ENCODE measurements at regions of chr1 and their contacts with region 1.

Region 1: DNA sequence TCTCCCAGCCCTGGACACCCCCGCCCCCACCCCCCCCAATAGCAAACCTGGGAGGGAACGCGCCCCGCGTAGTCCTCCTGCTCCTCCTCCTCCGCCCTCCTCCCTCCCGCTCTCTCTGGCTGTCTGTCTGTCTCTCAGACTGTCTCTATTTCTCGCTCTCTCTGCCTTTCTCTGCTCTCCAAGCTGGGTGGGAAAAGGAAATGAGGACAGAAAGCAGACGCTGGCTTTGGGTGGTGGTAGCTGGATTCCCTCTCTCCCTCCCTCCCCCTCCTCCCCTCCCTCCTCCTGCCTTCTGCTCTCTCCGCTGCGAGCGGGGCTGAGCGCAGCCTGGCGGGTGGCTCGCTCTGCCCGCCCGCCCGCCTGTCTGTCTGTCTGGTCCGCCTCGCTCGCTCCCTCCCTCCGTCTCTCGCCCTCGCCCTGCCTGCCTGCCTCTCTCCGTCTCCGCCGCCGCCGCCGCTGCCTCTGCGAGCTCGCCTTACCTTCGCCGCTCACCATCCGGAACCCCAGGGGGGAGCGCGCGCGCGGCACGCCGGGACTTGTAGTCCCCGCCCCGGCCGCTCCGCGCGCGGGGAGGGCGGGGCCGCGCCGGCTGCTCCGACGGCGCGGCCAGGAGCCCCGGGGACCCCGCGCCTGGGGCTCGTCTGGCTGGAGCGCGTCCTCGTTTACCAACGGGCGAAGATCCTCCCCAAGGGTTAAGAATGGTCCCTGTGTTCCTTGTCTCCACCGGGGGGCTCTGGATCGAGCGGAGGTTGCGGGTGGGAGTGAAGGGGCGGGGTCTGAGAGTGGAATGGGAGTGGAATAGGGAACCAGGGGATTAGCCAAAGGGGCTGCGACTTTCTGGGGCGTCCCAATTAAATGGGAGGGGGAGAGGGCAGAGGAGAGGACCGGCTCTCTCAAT is at the start of gene AHDC1:
- DNase-seq: peak; percentile 94
- H3K4me3 ChIP-seq: peak within 1 kb of the TSS; percentile 78
- H3K27ac ChIP-seq: peak within 1 kb of the TSS; percentile 57
- H3K4me1 ChIP-seq: peaks cover 76% of the 10 kb centered on the region
- CTCF ChIP-seq: no peak
- total RNA-seq, gene AHDC1: 5.5 and 6.5 TPM in 2 replicates

Region 2: DNA sequence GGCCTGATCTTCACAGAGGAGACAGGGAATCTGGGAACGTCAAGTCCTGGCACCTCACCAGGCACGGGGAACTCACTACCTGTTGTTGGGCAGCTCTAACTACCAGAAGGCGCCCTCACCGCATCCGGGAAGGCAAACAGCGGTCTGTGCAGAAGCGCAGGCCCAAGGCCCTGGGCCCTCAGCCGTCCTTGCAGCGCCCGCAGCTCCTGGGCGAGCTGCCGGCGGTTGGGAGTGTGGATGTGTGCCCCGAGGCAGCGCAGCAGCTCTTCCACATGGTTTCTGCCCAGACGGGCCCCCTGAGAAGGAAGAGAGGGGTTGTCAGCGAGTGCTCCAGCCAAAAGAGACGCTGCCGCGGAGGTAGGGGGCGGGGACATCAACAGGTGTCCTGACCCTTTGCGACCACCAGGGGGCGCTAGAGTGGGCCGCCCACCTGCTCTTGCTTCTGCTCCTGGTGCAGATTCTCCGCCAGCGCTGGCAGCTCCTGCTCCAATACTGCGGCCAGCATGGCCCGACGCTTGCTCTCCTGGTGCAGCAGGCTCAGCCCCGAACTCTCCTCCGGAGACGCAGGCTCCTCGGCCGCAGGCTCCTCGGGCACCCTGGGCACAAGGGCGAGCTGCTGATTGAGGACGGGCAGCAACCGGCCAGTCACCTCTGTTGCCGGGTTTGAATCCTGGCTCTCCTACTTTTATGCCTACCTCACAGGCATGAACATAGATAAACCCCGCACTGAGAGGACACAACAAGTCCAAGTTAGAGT is 246.5 kb before region 1 on chr1:
- CTCF ChIA-PET with region 1: interaction called, 3 read pairs
- POLR2A ChIA-PET with region 1: interaction called, 4 read pairs
- intact Hi-C with region 1: loop called (anchors 1 kb)
- DNase-seq: peak; percentile 77
- H3K4me3 ChIP-seq: peak overlapping the region; percentile 65
- H3K27ac ChIP-seq: peak overlapping the region; percentile 25
- H3K4me1 ChIP-seq: peaks cover 26% of the 10 kb centered on the region
- CTCF ChIP-seq: peak; percentile 87

Region 3: DNA sequence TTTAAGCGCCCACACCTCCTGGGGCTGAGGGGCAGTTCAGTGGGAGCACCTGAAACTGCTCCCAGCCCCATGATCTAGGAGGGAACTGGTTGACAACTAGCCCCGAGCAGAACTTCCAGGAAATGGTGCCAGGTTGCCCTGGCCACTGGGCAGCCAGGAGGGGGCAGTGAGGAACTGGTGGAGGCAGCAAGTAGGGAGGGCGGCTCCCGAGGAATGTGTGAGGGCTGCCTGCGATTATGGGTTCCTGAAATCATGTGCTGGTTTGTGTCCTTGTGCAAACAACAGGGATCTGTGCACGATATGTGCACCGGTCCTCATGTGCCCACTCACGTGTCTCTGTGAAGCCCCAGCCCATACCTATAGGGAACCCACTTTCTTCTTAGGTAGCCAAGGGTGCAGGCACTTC is 201.6 kb before region 1 on chr1:
- CTCF ChIA-PET with region 1: interaction called, 6 read pairs
- POLR2A ChIA-PET with region 1: no interaction called
- intact Hi-C with region 1: loop called (anchors 1 kb)
- DNase-seq: no peak
- H3K4me3 ChIP-seq: no peak overlapping the region
- H3K27ac ChIP-seq: peak overlapping the region; percentile 86
- H3K4me1 ChIP-seq: peaks cover 53% of the 10 kb centered on the region
- CTCF ChIP-seq: no peak

Region 4: DNA sequence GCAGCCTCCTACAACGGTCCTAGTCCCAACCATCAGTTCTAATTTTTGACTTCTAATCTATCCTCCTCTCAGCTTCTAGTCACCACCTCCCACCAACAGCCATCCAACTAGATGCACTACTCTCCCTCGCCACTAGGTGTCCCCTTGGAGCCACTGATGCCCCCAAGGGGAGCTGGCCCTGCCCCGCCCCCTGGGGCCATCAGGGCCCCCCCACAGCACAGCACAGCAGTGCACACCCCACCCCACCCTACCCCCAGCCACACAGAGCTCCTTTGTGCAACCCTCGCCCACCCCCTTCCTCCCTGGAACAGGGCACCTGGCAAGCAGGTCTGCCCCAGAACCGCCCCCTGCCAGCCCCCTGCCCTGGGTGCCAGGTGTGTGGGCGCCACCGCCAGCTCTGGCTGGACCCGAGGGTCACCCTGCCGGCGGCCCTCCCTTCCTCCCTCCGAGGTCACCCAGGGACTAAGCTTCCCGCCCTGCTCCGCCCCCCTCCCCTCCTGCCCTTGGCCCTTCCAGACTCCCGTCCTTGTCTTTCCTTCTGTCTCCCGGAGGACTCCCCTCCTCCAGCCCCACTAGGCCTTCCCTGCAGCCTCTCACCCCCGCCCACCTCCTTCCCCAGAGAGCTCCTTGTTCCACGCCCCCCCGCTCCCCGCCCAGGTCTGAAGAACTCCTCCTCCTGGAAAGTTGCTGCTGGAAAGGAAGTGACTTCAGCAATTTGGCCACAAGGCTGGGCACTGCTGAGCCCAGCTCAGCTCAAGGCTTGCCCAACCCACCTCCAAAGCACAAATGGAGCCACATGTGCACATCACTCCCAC is 46.9 kb before region 1 on chr1:
- CTCF ChIA-PET with region 1: interaction called, 10 read pairs
- POLR2A ChIA-PET with region 1: interaction called, 3 read pairs
- intact Hi-C with region 1: loop called (anchors 1 kb)
- DNase-seq: peak; percentile 77
- H3K4me3 ChIP-seq: peak overlapping the region; percentile 24
- H3K27ac ChIP-seq: peak overlapping the region; percentile 67
- H3K4me1 ChIP-seq: peaks cover 32% of the 10 kb centered on the region
- CTCF ChIP-seq: peak; percentile 89